ENCODE measurements at regions of chrX and their contacts with region 1.

Region 1: DNA sequence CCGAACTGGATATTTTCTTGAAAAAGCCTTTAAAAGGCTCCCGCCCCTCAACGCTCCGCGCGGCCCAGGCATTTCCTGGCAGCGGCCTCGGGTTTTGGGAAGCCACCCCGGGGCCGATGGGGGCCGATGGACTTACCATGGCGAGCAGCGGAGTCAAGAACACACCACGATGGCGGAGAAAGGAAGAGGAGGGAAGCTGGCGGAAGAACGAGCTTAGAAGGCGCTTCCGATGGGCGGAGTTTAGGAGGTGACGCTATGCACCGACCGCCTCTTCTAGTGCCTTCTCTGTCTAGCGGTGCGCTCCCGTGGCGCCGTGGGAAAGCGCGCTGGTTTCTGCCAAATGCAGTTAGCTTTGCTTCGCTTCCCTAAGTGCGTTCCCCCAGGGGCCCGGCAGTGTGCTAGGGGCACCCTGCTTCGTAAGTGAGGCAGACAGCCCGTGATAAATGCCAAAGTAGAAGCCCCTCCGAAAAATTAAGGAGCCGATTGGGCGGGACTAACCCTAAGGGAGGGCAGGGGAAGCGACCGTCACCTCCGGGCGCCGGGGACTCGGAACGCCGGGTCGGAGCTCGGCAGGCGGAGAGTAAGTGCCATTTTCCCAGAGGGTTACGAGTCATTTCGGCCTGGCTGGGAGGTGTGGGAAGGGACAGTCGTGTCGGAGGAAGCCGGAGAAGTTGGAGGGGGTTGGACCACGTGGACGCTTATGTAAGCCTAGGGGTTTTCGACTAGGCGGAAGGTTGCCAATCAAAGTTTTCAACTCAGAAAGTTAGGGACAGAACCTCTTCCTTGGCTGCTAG is at the start of gene RPL39:
- DNase-seq: peak; percentile 90
- ATAC-seq: peak; percentile 93
- H3K4me3 ChIP-seq: peak within 1 kb of the TSS; percentile 72 to 95 (median 75)
- H3K4me3 Mint-ChIP-seq: peak within 1 kb of the TSS; percentile 96
- H3K27ac ChIP-seq: peak within 1 kb of the TSS; percentile 96
- H3K27ac Mint-ChIP-seq: peak within 1 kb of the TSS; percentile 96
- H3K4me1 ChIP-seq: peaks cover 16 to 35% of the 10 kb centered on the region in 2 donors
- H3K4me1 Mint-ChIP-seq: peaks cover 34% of the 10 kb centered on the region
- H3K27me3 ChIP-seq: no peaks in the 10 kb centered on the region
- H3K27me3 Mint-ChIP-seq: no peaks in the 10 kb centered on the region
- CTCF ChIP-seq: no peak
- total RNA-seq, gene RPL39: 3,259 and 3,356 TPM in 2 replicates

Region 2: DNA sequence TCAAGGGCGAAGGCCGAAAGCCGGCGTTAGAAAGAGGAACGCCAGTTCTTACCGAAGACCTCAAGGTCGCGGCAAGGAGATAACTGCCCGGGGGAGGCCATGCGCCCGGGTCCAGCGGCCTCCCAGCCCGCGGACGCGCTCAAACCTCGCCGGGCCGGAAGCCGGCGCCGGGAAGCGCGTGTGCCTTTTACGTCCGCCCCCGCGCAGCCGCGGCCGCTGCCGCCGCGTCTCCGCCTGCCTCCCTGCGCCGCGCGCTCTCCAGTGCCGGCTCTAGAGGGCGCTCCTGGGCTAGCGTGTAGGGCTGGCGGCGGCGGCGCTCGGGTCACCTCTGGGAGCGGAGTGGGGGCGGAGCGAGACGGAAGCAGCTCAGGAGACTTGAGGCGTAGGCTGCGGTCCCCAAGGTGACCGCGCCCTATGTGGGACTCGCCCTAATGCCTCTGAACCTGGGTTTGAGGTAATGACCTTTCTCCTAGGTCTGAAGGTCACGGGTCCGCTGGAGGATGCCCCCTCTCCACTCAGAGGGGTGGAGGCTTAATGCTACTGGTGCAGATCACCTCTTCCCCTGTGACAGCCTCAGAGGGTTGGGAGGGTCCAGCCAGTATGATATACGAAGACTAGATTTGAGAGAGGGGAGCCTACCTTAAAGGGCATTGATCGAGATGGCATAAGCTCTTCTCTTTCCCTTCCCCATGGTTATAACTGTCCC is 322.6 kb before region 1 on chrX:
- CTCF ChIA-PET with region 1: no interaction called
- POLR2A ChIA-PET with region 1: interaction called, 4 read pairs
- intact Hi-C with region 1: loop called (anchors 2 kb)
- DNase-seq: peak; percentile 92
- ATAC-seq: peak; percentile 76
- H3K4me3 ChIP-seq: peak overlapping the region; percentile 8 to 88 (median 83)
- H3K4me3 Mint-ChIP-seq: peak overlapping the region; percentile 85
- H3K27ac ChIP-seq: peak overlapping the region; percentile 92 to 95
- H3K27ac Mint-ChIP-seq: peak overlapping the region; percentile 92
- H3K4me1 ChIP-seq: peaks cover 3 to 15% of the 10 kb centered on the region in 2 donors
- H3K4me1 Mint-ChIP-seq: peaks cover 8% of the 10 kb centered on the region
- H3K27me3 ChIP-seq: no peaks in the 10 kb centered on the region
- H3K27me3 Mint-ChIP-seq: no peaks in the 10 kb centered on the region
- CTCF ChIP-seq: peak; percentile 68

Region 3: DNA sequence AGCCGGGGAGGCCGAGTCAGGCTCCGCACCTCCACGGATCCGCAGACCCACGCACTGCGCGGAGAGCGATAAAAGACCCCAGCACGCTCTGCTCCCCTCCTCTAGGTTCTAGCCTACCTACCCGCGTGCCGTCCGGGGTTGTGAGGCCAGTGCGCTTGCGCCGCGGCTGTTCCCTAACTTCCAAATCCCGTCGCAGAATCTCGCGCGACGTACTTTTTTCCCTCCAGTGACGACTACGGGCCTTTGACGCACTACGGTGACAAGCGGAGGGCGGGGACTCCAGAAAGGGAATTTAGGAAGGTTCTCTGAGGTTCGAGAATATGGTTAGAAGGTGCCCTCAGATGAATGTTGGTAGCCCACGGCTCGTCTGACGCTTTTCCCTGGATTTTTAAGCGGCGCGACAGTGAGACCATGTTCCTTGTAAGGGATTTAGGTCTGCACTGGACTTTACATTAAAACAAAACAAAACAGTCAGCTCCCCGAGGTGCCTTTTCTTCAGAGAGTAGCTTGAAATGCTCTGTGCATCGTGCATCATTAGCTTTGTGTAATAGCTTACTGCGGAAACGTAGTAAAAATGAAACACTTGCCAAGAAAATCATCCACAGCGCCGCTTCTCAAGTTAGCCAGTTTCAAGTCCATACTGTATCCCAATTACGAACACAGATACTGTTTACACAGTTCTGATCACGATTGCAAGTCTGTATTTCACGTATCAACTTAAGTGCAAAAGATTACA is 185.2 kb before region 1 on chrX and contains the start of gene NKRF:
- CTCF ChIA-PET with region 1: interaction called, 3 read pairs
- POLR2A ChIA-PET with region 1: interaction called, 11 read pairs
- intact Hi-C with region 1: loop called (anchors 5 kb)
- DNase-seq: peak; percentile 94
- ATAC-seq: peak; percentile 77
- H3K4me3 ChIP-seq: peak within 1 kb of the TSS; percentile 54 to 86 (median 71)
- H3K4me3 Mint-ChIP-seq: peak within 1 kb of the TSS; percentile 97
- H3K27ac ChIP-seq: peak within 1 kb of the TSS; percentile 87 to 94
- H3K27ac Mint-ChIP-seq: peak within 1 kb of the TSS; percentile 99
- H3K4me1 ChIP-seq: peaks cover 12 to 29% of the 10 kb centered on the region in 2 donors
- H3K4me1 Mint-ChIP-seq: peaks cover 42% of the 10 kb centered on the region
- H3K27me3 ChIP-seq: no peaks in the 10 kb centered on the region
- H3K27me3 Mint-ChIP-seq: no peaks in the 10 kb centered on the region
- CTCF ChIP-seq: no peak
- total RNA-seq, gene NKRF: 16.1 and 16.2 TPM in 2 replicates

Region 4: DNA sequence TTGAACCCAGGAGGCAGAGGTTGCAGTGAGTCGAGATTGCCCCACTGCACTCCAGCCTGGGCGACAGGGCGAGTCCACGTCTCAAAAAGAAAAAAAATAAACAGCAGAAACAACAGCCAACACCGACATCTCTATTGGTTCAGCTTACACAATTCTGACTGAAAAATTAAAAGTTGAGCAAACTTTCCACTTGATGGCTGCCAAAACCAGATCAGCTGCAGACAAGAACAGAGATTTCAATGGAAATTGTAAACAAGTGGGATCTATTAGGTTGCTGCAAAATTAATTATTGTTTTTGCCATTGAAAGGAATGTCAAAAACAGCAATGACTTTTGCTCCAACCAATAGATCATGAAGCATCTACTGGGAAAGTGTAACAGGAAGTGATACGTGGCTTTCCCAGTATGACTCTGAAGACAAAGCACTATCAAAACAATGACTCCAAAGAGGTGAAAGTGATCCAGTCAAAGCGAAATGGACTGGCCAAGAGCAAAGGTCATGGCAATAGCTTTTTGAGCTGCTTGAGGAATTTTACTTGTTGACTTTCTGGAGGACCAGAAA is 34.8 kb after region 1 on chrX:
- CTCF ChIA-PET with region 1: no interaction called
- POLR2A ChIA-PET with region 1: interaction called, 5 read pairs
- intact Hi-C with region 1: loop called (anchors 1 kb)
- DNase-seq: no peak
- ATAC-seq: no peak
- H3K4me3 ChIP-seq: no peak overlapping the region
- H3K4me3 Mint-ChIP-seq: no peak overlapping the region
- H3K27ac ChIP-seq: no peak overlapping the region
- H3K27ac Mint-ChIP-seq: no peak overlapping the region
- H3K4me1 ChIP-seq: peaks cover 6 to 9% of the 10 kb centered on the region in 2 donors
- H3K4me1 Mint-ChIP-seq: peaks cover 11% of the 10 kb centered on the region
- H3K27me3 ChIP-seq: no peaks in the 10 kb centered on the region
- H3K27me3 Mint-ChIP-seq: no peaks in the 10 kb centered on the region
- CTCF ChIP-seq: no peak

Region 5: DNA sequence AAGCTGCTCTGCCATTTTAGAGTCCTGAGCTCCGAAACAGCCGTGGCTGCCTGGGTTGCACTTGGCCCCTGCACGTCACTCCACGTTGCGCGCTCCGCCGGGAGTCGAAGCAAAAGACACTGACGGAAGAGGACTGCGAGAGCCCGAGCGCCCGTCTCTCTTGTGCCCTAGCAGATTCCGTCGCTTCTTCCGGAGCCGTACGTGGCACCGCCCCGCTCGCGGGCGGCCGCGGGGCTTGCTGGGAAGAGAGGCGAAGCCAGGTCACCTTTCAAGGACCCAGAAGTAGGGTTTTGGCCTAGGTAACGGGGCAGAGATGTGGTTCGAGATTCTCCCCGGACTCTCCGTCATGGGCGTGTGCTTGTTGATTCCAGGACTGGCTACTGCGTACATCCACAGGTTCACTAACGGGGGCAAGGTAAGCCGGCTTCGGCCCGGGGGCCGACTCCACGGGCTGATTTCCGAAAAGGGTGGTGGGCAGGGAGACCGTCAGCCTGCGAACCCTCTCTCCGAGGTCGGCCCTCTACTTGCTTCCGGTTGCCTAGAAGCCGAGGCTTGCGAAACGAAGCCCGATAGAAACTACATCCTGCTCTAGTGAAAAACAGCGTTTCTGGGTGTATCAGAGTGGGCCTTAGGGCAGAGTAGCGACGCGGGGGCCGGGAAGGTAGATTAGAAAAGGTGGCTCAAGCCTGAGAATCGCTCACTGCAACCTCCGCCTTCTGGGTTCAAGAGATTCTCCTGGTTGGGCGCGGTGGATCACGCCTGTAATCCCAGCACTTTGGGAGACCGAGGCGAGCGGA is 80.2 kb after region 1 on chrX and contains the starts of genes NDUFA1 and RNF113A:
- CTCF ChIA-PET with region 1: interaction called, 3 read pairs
- POLR2A ChIA-PET with region 1: interaction called, 6 read pairs
- intact Hi-C with region 1: loop called (anchors 1 kb)
- DNase-seq: peak; percentile 90
- ATAC-seq: peak; percentile 88
- H3K4me3 ChIP-seq: peak within 1 kb of the TSS; percentile 64 to 87 (median 79)
- H3K4me3 Mint-ChIP-seq: peak within 1 kb of the TSS; percentile 98
- H3K27ac ChIP-seq: peak within 1 kb of the TSS; percentile 91 to 94
- H3K27ac Mint-ChIP-seq: peak within 1 kb of the TSS; percentile 100
- H3K4me1 ChIP-seq: peaks cover 7 to 16% of the 10 kb centered on the region in 2 donors
- H3K4me1 Mint-ChIP-seq: peaks cover 22% of the 10 kb centered on the region
- H3K27me3 ChIP-seq: no peaks in the 10 kb centered on the region
- H3K27me3 Mint-ChIP-seq: no peaks in the 10 kb centered on the region
- CTCF ChIP-seq: no peak
- total RNA-seq, gene NDUFA1: 32.8 and 39.5 TPM in 2 replicates
- total RNA-seq, gene RNF113A: 32.1 and 37.2 TPM in 2 replicates